Panc1 (cell line): ENCODE measurements at regions of chr22 and their contacts with region 1.

Region 1: GRCh38 chr22:41157083-41157482 is 48.0 kb upstream of the L3MBTL2 start:
- DNase-seq: no peak
- ATAC-seq: no peak
- H3K4me3 ChIP-seq: no peak overlapping the region
- H3K27ac ChIP-seq: no peak overlapping the region
- H3K4me1 ChIP-seq: no peaks in the 10 kb centered on the region
- H3K27me3 ChIP-seq: no peaks in the 10 kb centered on the region
- CTCF ChIP-seq: no peak

Region 2: DNA sequence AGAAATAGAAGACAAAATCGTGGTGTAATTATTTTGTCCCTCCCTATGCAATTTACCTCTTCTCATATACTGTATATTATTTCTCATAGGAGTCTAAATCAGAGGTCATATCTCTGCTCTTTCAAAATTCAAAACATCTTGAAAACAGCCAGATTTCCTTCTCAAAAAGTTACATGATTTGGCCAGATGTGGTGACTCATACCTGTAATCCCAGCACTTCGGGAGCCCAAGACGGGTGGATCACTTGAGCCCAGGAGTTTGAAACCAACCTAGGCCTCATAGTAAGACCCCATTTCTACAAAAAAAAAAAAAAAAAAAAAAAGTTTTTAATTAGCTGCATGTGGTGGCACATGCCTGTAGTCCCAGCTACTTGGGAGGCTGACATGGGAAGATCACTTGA is 266.2 kb before region 1 on chr22:
- CTCF ChIA-PET with region 1: no interaction called
- POLR2A ChIA-PET with region 1: interaction called, 11 read pairs
- in situ Hi-C with region 1: no loop called
- intact Hi-C with region 1: no loop called
- DNase-seq: no peak
- ATAC-seq: no peak
- H3K4me3 ChIP-seq: no peak overlapping the region
- H3K27ac ChIP-seq: no peak overlapping the region
- H3K4me1 ChIP-seq: no peaks in the 10 kb centered on the region
- H3K27me3 ChIP-seq: no peaks in the 10 kb centered on the region
- CTCF ChIP-seq: no peak

Region 3: GRCh38 chr22:40982482-40983385 is 174.3 kb before region 1 on chr22:
- CTCF ChIA-PET with region 1: no interaction called
- POLR2A ChIA-PET with region 1: no interaction called
- in situ Hi-C with region 1: no loop called
- intact Hi-C with region 1: no loop called
- DNase-seq: no peak
- ATAC-seq: peak; percentile 34; the same call in 1 of the 2 replicates
- H3K4me3 ChIP-seq: no peak overlapping the region
- H3K27ac ChIP-seq: no peak overlapping the region
- H3K4me1 ChIP-seq: no peaks in the 10 kb centered on the region
- H3K27me3 ChIP-seq: no peaks in the 10 kb centered on the region
- CTCF ChIP-seq: no peak